ENCODE measurements at regions of chr3 and their contacts with region 1.

Region 1: DNA sequence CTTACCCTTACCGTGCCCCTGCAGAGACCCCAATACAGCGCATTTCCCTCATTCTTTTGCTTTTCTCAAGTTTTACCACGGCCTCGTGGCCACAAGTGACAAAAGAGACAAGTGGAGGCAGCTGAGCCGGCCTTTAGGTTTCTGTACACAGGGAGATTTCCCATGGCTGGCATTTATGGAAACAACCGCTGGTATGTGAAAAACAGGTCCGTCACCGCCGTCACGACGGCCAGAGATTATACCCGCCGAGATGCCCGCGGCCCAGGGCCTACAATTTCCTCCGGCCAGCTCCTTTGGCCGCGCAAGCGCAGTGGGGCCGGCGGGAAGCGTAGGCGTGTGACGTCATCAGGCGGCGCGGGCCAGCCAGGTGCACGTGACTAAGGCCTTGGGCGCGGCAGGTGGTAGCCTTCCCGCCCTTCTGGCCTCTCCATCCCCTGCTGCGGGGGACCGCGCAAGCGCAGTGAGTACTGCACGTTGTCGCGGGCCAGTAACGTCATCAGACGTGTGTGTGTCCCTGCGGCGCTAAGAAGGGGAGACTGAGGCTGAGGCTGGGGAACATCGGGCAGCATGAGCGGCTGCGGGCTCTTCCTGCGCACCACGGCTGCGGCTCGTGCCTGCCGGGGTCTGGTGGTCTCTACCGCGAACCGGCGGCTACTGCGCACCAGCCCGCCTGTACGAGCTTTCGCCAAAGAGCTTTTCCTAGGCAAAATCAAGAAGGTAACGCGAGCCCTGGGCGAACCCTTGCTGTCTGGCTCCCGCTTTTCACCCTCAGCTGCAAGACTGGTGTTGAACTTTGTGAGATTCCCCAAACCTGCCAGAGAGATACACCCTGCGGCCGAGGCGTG is at the start of gene ACAD9:
- DNase-seq: peak; percentile 97 to 99 (median 98)
- H3K4me3 ChIP-seq: peak within 1 kb of the TSS; percentile 85
- H3K27ac ChIP-seq: peak within 1 kb of the TSS; percentile 89 to 93
- H3K4me1 ChIP-seq: peaks cover 15% of the 10 kb centered on the region
- H3K27me3 ChIP-seq: no peaks in the 10 kb centered on the region
- CTCF ChIP-seq: peak in 1 of 3 donors; percentile 40
- EP300 ChIP-seq: no peak
- POLR2A ChIP-seq: peak; percentile 97
- total RNA-seq, gene ACAD9: 32.7 to 51.7 (median 39.0) TPM

Region 2: DNA sequence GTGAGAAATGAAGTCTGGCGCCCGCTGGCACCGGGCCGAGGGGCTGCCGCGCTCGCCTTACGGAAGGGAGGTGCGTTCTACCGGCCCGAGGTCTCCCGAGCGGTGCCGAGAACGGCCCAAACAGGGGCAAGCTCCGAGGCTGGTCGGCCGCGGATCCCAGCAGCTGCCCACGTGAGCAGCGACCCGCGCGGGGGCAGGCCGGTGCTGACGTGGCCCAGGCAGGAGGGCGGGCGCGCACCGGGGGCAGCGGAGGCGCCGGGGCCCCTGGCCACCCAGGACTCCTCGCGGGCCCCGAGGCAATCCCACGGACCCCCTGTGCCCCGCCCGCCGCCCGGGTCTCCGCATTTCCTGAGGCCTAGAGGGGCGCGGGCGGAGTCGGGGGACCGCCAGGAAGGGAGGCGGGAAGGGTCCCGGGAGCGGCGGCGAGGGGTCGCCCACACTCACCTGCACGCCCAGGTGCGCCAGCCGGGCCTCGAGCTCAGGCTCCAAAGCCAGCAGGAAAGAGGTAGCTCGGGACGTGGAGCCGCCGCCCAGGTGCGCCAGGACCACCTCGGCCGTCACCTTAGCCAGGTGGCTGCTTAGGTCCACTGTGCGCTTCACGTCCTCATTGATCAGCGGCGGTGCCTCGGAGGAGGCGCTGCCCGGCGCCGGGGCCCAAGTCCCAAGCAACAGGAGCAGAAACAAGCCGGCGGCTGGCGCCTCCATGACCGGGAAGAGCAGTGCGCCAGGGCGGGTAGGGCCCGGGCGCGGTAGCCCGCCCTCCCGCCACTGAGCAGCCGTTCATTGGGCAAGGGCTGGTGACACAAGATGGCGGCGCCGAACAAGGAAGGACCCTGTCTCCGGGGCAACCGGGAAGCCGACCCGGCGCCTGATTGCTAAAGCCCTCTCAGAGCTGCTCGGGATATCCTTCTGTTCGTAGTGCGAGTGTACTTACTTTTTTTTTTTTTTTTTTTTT is 229.0 kb before region 1 on chr3 and contains the start of gene RPN1:
- intact Hi-C with region 1: loop called in 1 of 4 experiments (anchors 1 kb)
- DNase-seq: peak; percentile 96 to 98 (median 97)
- H3K4me3 ChIP-seq: peak within 1 kb of the TSS; percentile 79
- H3K27ac ChIP-seq: peak within 1 kb of the TSS; percentile 77 to 96
- H3K4me1 ChIP-seq: peaks cover 2% of the 10 kb centered on the region
- H3K27me3 ChIP-seq: no peaks in the 10 kb centered on the region
- CTCF ChIP-seq: peak in 1 of 3 donors; percentile 25
- EP300 ChIP-seq: no peak
- POLR2A ChIP-seq: peak; percentile 71
- total RNA-seq, gene RPN1: 124 to 182 (median 134) TPM

Region 3: GRCh38 chr3:128917291-128917690 is 37.9 kb after region 1 on chr3:
- intact Hi-C with region 1: no loop called
- DNase-seq: no peak
- H3K4me3 ChIP-seq: no peak overlapping the region
- H3K27ac ChIP-seq: no peak overlapping the region
- H3K4me1 ChIP-seq: no peaks in the 10 kb centered on the region
- H3K27me3 ChIP-seq: no peaks in the 10 kb centered on the region
- CTCF ChIP-seq: no peak
- EP300 ChIP-seq: no peak
- POLR2A ChIP-seq: no peak

Region 4: DNA sequence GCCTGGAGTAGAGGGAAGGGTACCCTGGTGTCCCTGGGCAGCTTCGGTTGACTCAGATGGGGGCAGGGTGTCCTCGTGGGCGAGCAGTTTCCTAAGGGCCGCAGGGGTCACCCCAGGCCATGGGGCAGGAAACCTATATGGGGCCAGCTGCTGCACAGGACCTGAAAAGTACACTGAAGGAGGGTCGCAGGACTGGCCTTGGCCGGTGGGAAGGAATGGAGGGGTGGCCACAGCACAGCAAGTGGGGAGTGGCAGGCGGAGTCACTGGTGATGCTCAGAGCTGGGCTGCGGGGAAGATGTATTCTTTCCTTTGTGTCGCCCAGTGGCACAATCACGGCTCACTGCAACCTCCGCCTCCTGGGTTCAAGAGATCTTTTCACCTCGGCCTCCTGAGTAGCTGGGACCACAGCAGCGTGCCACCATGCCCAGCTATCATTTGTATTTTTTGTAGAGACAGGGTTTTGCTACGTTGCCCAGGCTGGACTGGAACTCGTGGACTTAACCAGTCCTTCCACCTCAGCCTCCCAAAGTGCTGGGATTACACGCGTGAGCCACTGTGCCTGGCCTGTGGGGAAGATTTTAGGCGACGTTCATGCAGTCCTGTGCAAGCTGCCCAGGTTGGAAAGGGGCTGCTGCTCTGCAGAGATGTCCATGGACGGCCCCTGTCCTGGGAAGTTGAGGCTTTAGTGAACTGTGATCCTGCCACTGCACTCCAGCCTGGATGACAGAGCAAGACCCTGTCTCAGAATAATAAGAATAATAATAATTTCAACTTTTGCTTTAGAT is 491.9 kb after region 1 on chr3:
- intact Hi-C with region 1: no loop called
- DNase-seq: no peak
- H3K4me3 ChIP-seq: no peak overlapping the region
- H3K27ac ChIP-seq: no peak overlapping the region
- H3K4me1 ChIP-seq: no peaks in the 10 kb centered on the region
- H3K27me3 ChIP-seq: no peaks in the 10 kb centered on the region
- CTCF ChIP-seq: no peak
- EP300 ChIP-seq: no peak
- POLR2A ChIP-seq: no peak

Measured in ovary (tissue), 10 donors.